ENCODE measurements at regions of chr1 and their contacts with region 1.

Region 1: DNA sequence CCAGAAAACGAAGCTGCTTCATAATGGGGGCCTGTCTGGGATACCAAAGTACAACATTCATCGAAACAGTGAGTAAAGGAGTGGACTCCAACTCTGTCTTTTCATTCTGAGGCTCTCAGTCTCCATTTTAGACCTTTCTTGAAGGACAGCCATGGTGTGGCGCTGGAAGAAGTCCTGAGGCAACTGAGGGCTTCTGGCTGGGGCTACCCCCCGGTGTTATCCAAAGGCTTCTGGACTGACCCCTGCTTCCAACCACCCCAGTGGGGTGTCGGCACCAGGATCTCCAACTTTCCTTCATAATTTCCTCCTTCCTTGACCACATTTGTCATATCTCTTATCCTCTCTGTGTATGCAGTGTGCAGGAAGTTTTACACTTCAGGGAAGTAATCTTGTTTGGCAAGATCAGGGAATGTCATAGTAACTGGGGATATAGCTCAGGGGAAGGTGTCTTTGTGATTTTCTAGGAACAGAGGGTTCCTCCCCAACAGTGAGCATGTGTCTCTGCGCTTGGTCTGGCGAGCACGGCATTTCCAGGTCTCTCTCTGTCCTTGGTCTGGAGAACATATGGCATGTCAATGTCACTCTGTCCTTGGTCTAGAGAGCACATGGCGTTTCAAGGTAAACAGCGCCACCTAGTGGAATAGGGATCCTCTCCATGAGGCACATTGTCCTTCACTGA is 19.4 kb upstream of the BSDC1 start:
- DNase-seq: no peak
- ATAC-seq: peak; percentile 70

Region 2: GRCh38 chr1:32052887-32053286 is 360.8 kb before region 1 on chr1:
- intact Hi-C with region 1: no loop called
- DNase-seq: no peak
- ATAC-seq: no peak

Region 3: DNA sequence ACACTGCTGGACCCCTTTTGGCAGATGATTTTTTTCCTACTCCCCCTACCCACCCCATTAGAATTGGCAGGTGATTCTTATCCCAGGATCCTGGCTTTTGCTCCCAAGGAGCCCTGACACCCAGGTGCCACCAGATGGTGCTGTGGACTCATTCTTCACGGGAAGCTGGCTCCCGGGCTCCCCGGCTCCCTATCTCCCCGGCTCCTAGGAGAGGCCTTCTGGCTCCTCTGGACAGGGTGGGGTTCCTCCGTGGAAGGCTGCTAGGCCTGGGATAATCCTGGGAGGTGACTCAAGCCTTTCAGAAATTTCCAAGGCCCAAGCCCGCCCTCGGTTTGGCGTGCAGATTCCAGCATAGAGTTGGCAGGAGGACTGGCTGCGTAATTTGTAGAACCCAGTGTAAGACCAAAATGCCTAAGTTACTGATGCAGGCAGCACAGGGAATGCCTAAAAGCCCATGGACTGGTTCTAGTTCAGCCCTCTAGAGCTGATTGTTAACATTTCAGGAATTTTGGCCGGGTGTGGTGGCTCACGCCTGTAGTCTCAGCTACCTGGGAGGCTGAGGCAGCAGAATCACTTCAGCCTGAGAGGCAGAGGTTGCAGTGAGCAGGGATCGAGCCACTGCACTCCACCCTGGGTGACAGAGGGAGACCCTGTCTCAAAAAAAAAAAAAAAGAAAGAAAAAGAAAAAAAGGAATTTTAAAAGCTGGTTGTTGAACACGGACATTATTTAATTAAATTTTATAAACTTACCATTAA is 12.6 kb before region 1 on chr1:
- intact Hi-C with region 1: loop called (anchors 1 kb)
- DNase-seq: peak; percentile 93
- ATAC-seq: peak; percentile 99